Activated T-helper 1 cell treated with anti-CD3 and anti-CD28 coated beads, Interleukin-12 subunit alpha, Interleukin-12 subunit beta, Interleukin-2, Interleukin-4 antibody, amounts not matched to agents 30 ng/mL and 10 ng/mL and 1 ng/mL, durations not matched to agents 14 hours and 24 hours and 36 hours (primary cell): ENCODE measurements at regions of chrX and their contacts with region 1.

Region 1: GRCh38 chrX:49191033-49191871 is 5.1 kb upstream of the PRICKLE3 start:
- DNase-seq: peak; percentile 82
- H3K4me3 Mint-ChIP-seq: peak overlapping the region; percentile 95
- H3K27ac Mint-ChIP-seq: peak overlapping the region; percentile 93
- H3K4me1 Mint-ChIP-seq: peaks cover 24% of the 10 kb centered on the region
- H3K27me3 Mint-ChIP-seq: no peaks in the 10 kb centered on the region

Region 2: DNA sequence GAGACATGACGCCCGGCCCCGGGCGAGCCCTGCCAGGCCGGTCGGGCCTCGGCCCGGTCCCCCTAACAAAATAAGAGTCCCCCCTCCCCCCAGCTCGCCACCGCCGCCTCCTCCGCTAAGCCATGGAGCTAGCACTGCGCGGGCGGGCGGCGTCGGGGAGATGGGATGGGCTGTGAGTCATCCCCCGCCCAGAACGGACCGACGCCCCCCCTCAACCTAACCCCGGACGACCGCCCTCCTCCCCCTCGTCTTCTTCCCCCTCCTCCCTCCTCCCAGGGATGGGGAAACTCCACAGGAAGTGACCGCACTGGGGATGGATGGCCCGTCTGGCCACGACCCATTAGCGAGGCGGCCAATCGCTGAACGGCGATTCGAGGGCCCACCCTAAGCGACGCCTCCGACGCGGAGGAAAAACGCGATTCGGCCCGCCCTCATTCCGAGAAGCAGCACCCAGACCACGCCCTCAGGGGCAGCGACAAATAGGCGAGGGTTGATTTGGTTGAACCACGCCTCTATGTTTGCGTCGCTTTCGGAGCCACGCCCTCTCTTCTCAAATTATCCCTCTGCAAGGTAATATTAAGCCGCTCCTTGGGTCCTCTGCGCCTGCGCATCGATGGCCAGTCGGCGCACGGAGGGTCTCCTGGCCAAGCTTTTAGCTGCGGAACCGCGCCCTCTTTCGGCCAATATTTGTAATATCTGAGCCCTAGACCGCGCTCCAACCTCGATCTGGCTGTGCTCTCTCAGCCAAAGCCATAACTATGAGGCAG is 147.8 kb before region 1 on chrX and contains the start of gene TFE3:
- intact Hi-C with region 1: no loop called
- DNase-seq: peak; percentile 94
- H3K4me3 Mint-ChIP-seq: peak within 1 kb of the TSS; percentile 96
- H3K27ac Mint-ChIP-seq: peak within 1 kb of the TSS; percentile 95
- H3K4me1 Mint-ChIP-seq: peaks cover 39% of the 10 kb centered on the region
- H3K27me3 Mint-ChIP-seq: no peaks in the 10 kb centered on the region
- total RNA-seq, gene TFE3: 34.4 and 37.0 TPM in 2 replicates

Region 3: GRCh38 chrX:49163555-49164419 is 27.5 kb before region 1 on chrX:
- intact Hi-C with region 1: loop called (anchors 2 kb)
- DNase-seq: peak; percentile 77
- H3K4me3 Mint-ChIP-seq: peak overlapping the region; percentile 69
- H3K27ac Mint-ChIP-seq: peak overlapping the region; percentile 72
- H3K4me1 Mint-ChIP-seq: peaks cover 23% of the 10 kb centered on the region
- H3K27me3 Mint-ChIP-seq: peaks cover 4% of the 10 kb centered on the region

Region 4: GRCh38 chrX:49230469-49231232 is 39.4 kb after region 1 on chrX:
- intact Hi-C with region 1: loop called (anchors 1 kb)
- DNase-seq: peak; percentile 53
- H3K4me3 Mint-ChIP-seq: peak overlapping the region; percentile 60
- H3K27ac Mint-ChIP-seq: peak overlapping the region; percentile 79
- H3K4me1 Mint-ChIP-seq: peaks cover 17% of the 10 kb centered on the region
- H3K27me3 Mint-ChIP-seq: peaks cover 4% of the 10 kb centered on the region

Region 5: GRCh38 chrX:49754233-49754857 is 563.1 kb after region 1 on chrX:
- intact Hi-C with region 1: loop called (anchors 1 kb)
- DNase-seq: peak; percentile 12
- H3K4me3 Mint-ChIP-seq: no peak overlapping the region
- H3K27ac Mint-ChIP-seq: no peak overlapping the region
- H3K4me1 Mint-ChIP-seq: no peaks in the 10 kb centered on the region
- H3K27me3 Mint-ChIP-seq: peaks cover 3% of the 10 kb centered on the region

Region 6: DNA sequence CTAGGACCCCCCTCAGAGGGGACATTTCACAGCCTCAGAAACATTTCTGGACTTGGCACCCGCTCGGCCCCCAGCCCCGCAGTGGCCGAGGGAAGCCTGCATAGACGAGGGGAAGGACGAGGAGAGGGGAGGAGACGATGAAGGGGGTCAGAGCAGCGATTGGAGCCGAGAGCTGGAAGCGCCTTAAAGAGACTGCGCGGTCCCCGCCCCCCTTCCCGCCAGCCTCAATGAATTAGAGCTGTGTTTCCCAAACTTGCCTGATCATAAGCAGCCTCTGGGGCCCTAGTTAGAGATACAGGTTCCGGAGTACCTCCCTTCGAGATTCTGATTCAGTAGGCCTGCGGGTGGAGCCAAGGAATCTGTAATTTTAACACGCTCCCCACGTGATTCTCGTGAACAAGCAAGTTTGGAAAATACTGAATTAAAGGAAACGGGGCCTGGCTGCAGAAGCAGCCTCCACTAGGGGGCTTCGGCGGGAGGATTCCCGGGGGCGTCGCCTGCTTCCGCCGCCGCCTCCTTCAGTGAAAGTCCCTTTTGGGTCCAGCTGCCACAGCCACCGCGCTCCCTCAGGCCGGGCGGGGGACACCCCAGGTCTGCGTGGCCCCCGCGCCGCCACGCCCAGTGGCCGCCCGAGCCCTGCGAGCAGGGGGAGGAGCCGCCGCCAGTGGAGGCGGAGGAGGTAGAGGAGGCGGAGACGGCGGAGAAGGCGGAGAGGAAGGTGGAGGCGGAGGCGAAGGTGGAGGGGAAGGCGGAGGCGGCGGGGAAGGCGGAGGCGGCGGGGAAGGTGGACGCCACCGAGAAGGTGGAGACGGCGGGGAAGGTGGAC is 687.8 kb after region 1 on chrX and contains the start of gene USP27X:
- intact Hi-C with region 1: loop called (anchors 2 kb)
- DNase-seq: peak; percentile 75
- H3K4me3 Mint-ChIP-seq: peak within 1 kb of the TSS; percentile 80
- H3K27ac Mint-ChIP-seq: peak within 1 kb of the TSS; percentile 71
- H3K4me1 Mint-ChIP-seq: peaks cover 17% of the 10 kb centered on the region
- H3K27me3 Mint-ChIP-seq: peaks cover 1% of the 10 kb centered on the region
- total RNA-seq, gene USP27X: 1.2 and 1.9 TPM in 2 replicates